ENCODE measurements at regions of chr14 and their contacts with region 1.

Region 1: GRCh38 chr14:74867673-74868072 is 8.3 kb downstream of the PROX2 start:
- DNase-seq: no peak
- H3K4me3 ChIP-seq: no peak overlapping the region
- H3K27ac ChIP-seq: no peak overlapping the region
- H3K4me1 ChIP-seq: no peaks in the 10 kb centered on the region
- H3K27me3 ChIP-seq: no peaks in the 10 kb centered on the region
- CTCF ChIP-seq: no peak

Region 2: DNA sequence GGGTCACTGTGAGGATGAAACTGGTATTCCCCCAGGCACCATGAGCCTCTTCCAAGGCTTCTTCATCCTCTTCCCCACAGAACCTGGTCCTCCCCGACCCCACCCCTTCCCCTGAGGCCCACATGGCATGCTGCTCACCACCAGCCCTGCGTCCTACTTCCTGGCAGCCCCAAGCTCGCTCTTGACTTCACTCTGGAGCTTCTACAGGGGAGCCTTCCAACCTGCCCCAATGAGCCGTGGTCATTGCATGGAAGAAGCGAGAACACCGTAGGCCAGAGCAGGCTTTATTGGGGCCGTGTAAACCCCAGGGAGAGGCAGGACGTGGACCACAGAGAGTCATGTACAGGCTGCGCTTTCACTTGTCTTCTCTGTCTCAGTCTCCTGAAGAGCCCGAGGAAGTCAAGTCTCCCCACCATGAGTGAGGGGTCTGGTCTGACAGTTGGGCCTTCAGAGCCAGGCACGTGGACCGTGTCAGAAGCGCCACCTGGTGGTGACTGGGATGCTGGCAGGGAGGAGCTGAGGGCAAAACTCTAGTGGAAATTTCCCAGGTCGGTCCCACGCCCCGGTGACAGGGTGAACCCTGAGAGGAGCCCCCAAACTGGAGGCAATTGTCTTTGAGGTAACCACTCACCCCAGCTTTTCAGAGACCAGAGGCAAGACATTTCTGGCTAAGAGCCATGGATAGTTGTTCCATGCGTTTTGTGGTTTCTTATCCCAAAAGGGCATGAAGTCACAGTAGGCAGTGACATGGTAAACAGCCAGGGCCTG is 37.9 kb after region 1 on chr14:
- intact Hi-C with region 1: loop called (anchors 5 kb)
- DNase-seq: peak; percentile 72
- H3K4me3 ChIP-seq: no peak overlapping the region
- H3K27ac ChIP-seq: peak overlapping the region; percentile 39
- H3K4me1 ChIP-seq: peaks cover 63% of the 10 kb centered on the region
- H3K27me3 ChIP-seq: no peaks in the 10 kb centered on the region
- CTCF ChIP-seq: peak; percentile 93

Region 3: GRCh38 chr14:75222208-75222701 is 354.6 kb after region 1 on chr14:
- intact Hi-C with region 1: no loop called
- DNase-seq: peak; percentile 18
- H3K4me3 ChIP-seq: no peak overlapping the region
- H3K27ac ChIP-seq: no peak overlapping the region
- H3K4me1 ChIP-seq: peaks cover 4% of the 10 kb centered on the region
- H3K27me3 ChIP-seq: no peaks in the 10 kb centered on the region
- CTCF ChIP-seq: no peak

Region 4: GRCh38 chr14:75258615-75259466 is 391.2 kb after region 1 on chr14:
- intact Hi-C with region 1: no loop called
- DNase-seq: peak; percentile 99
- H3K4me3 ChIP-seq: peak overlapping the region; percentile 64
- H3K27ac ChIP-seq: peak overlapping the region; percentile 97
- H3K4me1 ChIP-seq: peaks cover 42% of the 10 kb centered on the region
- H3K27me3 ChIP-seq: no peaks in the 10 kb centered on the region
- CTCF ChIP-seq: no peak